Activated CD8-positive, alpha-beta T cell treated with anti-CD3 and anti-CD28 coated beads for 36 hours (primary cell): ENCODE measurements at regions of chr5 and their contacts with region 1.

Region 1: DNA sequence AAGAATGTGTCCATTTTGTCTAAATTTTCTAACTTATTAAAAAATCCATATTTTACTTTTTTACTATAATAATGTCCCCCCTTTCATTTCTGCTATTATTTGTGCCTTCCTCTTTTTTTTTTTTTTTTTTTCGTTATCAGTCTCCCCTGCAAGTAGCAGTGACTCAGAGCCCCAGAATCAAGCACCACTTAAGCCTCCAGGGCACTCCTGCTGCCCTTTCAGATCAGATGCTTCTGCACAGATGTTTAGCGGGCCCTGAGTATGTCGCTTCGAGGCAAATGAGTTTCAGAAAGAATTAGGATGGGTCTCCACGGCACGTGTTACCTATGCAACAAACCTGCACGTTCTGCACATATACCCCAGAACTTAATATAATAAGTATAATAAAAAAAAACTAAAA is 11.7 kb downstream of the MED7 start:
- DNase-seq: no peak
- ATAC-seq: no peak
- H3K4me3 Mint-ChIP-seq: no peak overlapping the region
- H3K27ac Mint-ChIP-seq: no peak overlapping the region
- H3K4me1 Mint-ChIP-seq: peaks cover 31% of the 10 kb centered on the region
- H3K27me3 Mint-ChIP-seq: no peaks in the 10 kb centered on the region
- CTCF ChIP-seq: no peak

Region 2: DNA sequence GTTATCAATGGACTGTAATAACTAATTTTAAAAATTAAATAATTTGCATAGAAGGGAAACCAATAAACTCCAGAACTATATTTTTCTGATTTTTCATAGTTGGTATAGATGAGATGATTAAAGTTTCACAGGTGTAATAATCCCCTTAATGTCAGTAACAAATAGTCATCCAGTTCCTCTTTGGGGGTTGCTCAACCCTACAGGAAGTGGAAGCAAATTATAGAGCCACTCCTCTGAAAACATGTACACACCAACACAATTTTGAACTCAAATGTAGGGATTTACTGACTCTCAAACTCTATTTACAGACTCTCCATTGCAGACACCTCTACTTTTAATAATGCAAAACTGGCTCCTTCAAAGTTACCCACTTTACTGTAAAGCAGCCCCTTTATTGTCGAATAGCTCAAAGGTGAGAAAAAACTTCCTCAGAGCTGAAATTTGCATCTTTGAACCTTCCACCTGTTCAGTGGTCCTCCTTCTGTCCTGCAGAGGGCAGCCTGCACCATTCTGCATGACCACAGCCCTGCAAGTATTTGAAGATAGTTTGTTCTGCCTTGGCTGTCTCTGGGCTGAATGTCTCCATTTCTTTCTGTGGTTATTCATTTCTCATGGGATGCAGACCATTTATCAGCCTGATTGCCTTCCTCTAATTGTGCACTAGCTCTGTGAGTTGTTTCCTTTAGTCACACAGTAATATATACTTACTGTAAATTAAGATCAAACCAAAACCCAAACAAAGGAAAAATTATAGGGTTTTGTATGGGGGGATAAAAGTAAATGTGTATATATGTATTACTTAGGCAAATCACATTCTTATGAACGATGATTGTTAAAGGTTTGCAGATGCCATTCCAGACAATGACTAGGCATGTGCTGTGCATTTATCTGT is 1187.2 kb before region 1 on chr5:
- CTCF ChIA-PET with region 1: interaction called, 3 read pairs
- POLR2A ChIA-PET with region 1: no interaction called
- intact Hi-C with region 1: loop called (anchors 10 kb)
- DNase-seq: peak; percentile 55
- ATAC-seq: peak; percentile 51
- H3K4me3 Mint-ChIP-seq: no peak overlapping the region
- H3K27ac Mint-ChIP-seq: no peak overlapping the region
- H3K4me1 Mint-ChIP-seq: peaks cover 5% of the 10 kb centered on the region
- H3K27me3 Mint-ChIP-seq: no peaks in the 10 kb centered on the region
- CTCF ChIP-seq: peak; percentile 63

Region 3: GRCh38 chr5:156934450-156935211 is 196.3 kb before region 1 on chr5:
- CTCF ChIA-PET with region 1: interaction called, 11 read pairs
- POLR2A ChIA-PET with region 1: no interaction called
- intact Hi-C with region 1: no loop called
- DNase-seq: peak; percentile 82
- ATAC-seq: peak; percentile 74
- H3K4me3 Mint-ChIP-seq: no peak overlapping the region
- H3K27ac Mint-ChIP-seq: peak overlapping the region; percentile 71
- H3K4me1 Mint-ChIP-seq: peaks cover 50% of the 10 kb centered on the region
- H3K27me3 Mint-ChIP-seq: no peaks in the 10 kb centered on the region
- CTCF ChIP-seq: peak; percentile 93

Region 4: DNA sequence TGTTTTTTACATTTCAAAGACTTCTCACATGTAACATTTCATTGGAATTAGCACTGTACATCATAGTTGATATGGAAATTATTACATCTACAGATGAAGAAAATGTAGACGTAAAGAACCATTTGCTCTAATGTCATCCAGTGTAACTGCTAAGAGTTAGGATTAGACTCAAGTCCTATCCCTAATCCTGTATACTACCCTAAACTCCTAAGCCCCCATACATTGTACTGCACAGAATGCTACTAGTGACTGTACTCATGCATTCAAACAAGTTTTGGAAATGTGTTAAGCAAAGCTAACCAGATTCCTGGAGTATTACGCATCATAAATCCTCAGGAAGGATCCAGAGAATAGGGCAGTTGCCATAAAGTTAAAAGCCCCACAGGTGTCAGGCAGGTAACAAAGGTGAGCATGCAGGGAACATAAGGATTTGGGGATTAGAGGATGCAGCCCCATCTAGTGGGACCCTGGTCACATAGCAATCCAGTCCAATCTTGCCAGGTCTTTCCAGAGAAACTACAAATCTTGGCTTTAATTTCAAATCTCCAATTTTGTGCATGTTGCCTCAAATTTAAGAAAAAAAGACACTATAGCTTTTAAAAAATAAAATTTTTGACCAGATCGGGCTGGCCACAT is 104.0 kb before region 1 on chr5:
- CTCF ChIA-PET with region 1: interaction called, 12 read pairs
- POLR2A ChIA-PET with region 1: interaction called, 3 read pairs
- intact Hi-C with region 1: no loop called
- DNase-seq: peak; percentile 18
- ATAC-seq: no peak
- H3K4me3 Mint-ChIP-seq: no peak overlapping the region
- H3K27ac Mint-ChIP-seq: peak overlapping the region; percentile 49
- H3K4me1 Mint-ChIP-seq: peaks cover 80% of the 10 kb centered on the region
- H3K27me3 Mint-ChIP-seq: no peaks in the 10 kb centered on the region
- CTCF ChIP-seq: peak; percentile 85

Region 5: GRCh38 chr5:157116483-157116954 is 14.4 kb before region 1 on chr5:
- CTCF ChIA-PET with region 1: interaction called, 20 read pairs
- POLR2A ChIA-PET with region 1: interaction called, 3 read pairs
- intact Hi-C with region 1: no loop called
- DNase-seq: peak; percentile 75
- ATAC-seq: peak; percentile 74
- H3K4me3 Mint-ChIP-seq: peak overlapping the region; percentile 54
- H3K27ac Mint-ChIP-seq: peak overlapping the region; percentile 84
- H3K4me1 Mint-ChIP-seq: peaks cover 35% of the 10 kb centered on the region
- H3K27me3 Mint-ChIP-seq: no peaks in the 10 kb centered on the region
- CTCF ChIP-seq: no peak

Region 6: GRCh38 chr5:157303023-157303422 is 172.1 kb after region 1 on chr5:
- CTCF ChIA-PET with region 1: no interaction called
- POLR2A ChIA-PET with region 1: no interaction called
- intact Hi-C with region 1: no loop called
- DNase-seq: no peak
- ATAC-seq: no peak
- H3K4me3 Mint-ChIP-seq: no peak overlapping the region
- H3K27ac Mint-ChIP-seq: peak overlapping the region; percentile 66
- H3K4me1 Mint-ChIP-seq: peaks cover 58% of the 10 kb centered on the region
- H3K27me3 Mint-ChIP-seq: no peaks in the 10 kb centered on the region
- CTCF ChIP-seq: no peak